ENCODE measurements at regions of chr15 and their contacts with region 1.

Region 1: GRCh38 chr15:35444557-35445204 is 101.3 kb downstream of the DPH6 start:
- DNase-seq: peak; percentile 1 to 37 (median 26)
- H3K4me3 ChIP-seq: no peak overlapping the region
- H3K4me3 Mint-ChIP-seq: no peak overlapping the region
- H3K27ac ChIP-seq: no peak overlapping the region
- H3K27ac Mint-ChIP-seq: no peak overlapping the region
- H3K4me1 ChIP-seq: no peaks in the 10 kb centered on the region
- H3K4me1 Mint-ChIP-seq: peaks cover 1% of the 10 kb centered on the region
- H3K27me3 ChIP-seq: no peaks in the 10 kb centered on the region
- H3K27me3 Mint-ChIP-seq: no peaks in the 10 kb centered on the region
- CTCF ChIP-seq: peak; percentile 91

Region 2: DNA sequence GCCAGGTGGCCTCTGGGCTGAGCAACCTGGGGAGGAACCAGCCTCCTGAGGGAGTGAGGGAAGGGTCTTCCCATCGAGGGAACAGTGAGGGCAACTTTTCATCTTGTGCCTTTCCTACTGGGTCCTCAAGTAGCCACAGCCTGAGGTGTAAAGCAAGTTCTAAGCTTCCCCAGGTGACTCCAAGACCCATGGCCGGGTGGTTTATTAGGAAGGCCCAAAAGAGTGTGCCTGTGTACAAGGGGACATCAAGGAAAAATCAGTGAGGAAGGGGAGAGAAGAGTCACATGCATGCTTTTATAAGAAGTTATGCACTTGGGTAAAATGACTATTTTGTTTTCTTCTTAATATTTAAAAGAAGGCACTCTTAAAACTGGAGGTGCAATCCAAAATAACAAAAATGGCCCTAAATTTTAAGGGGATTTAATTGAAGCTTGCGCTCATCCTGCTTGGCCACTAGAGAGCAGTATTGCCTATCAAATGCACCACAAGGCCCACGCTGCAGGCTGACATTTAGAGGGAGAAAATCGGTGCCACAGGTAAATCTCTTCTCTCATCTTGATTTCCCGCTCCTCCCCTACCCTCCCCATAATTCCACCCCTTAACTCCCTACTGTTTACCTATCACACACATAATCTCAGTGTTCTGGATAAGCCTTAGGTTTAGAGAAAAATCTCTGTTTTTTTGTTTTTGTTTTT is 366.3 kb before region 1 on chr15:
- intact Hi-C with region 1: loop called in 1 of 2 experiments (anchors 10 kb)
- DNase-seq: peak; percentile 39 to 59 (median 54)
- H3K4me3 ChIP-seq: no peak overlapping the region
- H3K4me3 Mint-ChIP-seq: no peak overlapping the region
- H3K27ac ChIP-seq: no peak overlapping the region
- H3K27ac Mint-ChIP-seq: no peak overlapping the region
- H3K4me1 ChIP-seq: peaks cover 0 to under 1% of the 10 kb centered on the region in 2 donors
- H3K4me1 Mint-ChIP-seq: peaks cover 6% of the 10 kb centered on the region
- H3K27me3 ChIP-seq: no peaks in the 10 kb centered on the region
- H3K27me3 Mint-ChIP-seq: peaks cover 0 to 5% (median 1%) of the 10 kb centered on the region in 3 donors
- CTCF ChIP-seq: peak; percentile 85

Region 3: GRCh38 chr15:35095941-35096340 is 348.7 kb before region 1 on chr15:
- intact Hi-C with region 1: no loop called
- DNase-seq: no peak
- H3K4me3 ChIP-seq: no peak overlapping the region
- H3K4me3 Mint-ChIP-seq: no peak overlapping the region
- H3K27ac ChIP-seq: no peak overlapping the region
- H3K27ac Mint-ChIP-seq: no peak overlapping the region
- H3K4me1 ChIP-seq: no peaks in the 10 kb centered on the region
- H3K4me1 Mint-ChIP-seq: peaks cover 5% of the 10 kb centered on the region
- H3K27me3 ChIP-seq: no peaks in the 10 kb centered on the region
- H3K27me3 Mint-ChIP-seq: peaks cover 0 to 4% (median 4%) of the 10 kb centered on the region in 3 donors
- CTCF ChIP-seq: no peak